HEK293 (cell line): ENCODE measurements at regions of chr2 and their contacts with region 1.

Region 1: GRCh38 chr2:38947240-38948239 is 57.9 kb downstream of the ARHGEF33 start:
- H3K4me3 ChIP-seq: no peak overlapping the region
- H3K27ac ChIP-seq: no peak overlapping the region
- H3K4me1 ChIP-seq: peaks cover 9% of the 10 kb centered on the region
- CTCF ChIP-seq: peak; percentile 78

Region 2: GRCh38 chr2:38959938-38960608 is 12.5 kb after region 1 on chr2:
- CTCF ChIA-PET with region 1: interaction called, 11 read pairs
- POLR2A ChIA-PET with region 1: interaction called, 3 read pairs
- H3K4me3 ChIP-seq: no peak overlapping the region
- H3K27ac ChIP-seq: no peak overlapping the region
- H3K4me1 ChIP-seq: no peaks in the 10 kb centered on the region
- CTCF ChIP-seq: no peak

Region 3: DNA sequence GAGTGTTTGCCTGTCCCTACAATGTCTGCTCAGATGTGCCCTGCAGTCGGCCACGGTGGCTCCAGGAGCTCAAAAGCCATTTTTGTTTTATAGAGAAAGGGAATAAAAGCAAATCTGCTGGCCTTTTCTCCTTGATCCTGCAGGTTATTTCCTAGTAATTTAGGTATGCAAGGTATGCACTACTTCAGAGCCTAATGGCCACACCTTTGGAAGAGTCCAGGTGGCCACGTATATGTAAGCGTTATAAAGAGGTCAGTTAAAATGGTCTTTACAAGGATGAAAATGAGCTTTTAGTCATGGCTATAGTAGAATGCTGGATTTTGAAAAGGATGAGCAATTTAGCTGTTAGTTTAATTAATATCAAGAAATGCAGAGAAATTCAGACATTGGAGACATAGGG is 23.8 kb after region 1 on chr2:
- CTCF ChIA-PET with region 1: interaction called, 12 read pairs
- POLR2A ChIA-PET with region 1: no interaction called
- H3K4me3 ChIP-seq: no peak overlapping the region
- H3K27ac ChIP-seq: no peak overlapping the region
- H3K4me1 ChIP-seq: no peaks in the 10 kb centered on the region
- CTCF ChIP-seq: no peak

Region 4: GRCh38 chr2:39018638-39019037 is 71.1 kb after region 1 on chr2:
- CTCF ChIA-PET with region 1: interaction called, 12 read pairs
- POLR2A ChIA-PET with region 1: no interaction called
- H3K4me3 ChIP-seq: no peak overlapping the region
- H3K27ac ChIP-seq: no peak overlapping the region
- H3K4me1 ChIP-seq: peaks cover 11% of the 10 kb centered on the region
- CTCF ChIP-seq: no peak

Region 5: DNA sequence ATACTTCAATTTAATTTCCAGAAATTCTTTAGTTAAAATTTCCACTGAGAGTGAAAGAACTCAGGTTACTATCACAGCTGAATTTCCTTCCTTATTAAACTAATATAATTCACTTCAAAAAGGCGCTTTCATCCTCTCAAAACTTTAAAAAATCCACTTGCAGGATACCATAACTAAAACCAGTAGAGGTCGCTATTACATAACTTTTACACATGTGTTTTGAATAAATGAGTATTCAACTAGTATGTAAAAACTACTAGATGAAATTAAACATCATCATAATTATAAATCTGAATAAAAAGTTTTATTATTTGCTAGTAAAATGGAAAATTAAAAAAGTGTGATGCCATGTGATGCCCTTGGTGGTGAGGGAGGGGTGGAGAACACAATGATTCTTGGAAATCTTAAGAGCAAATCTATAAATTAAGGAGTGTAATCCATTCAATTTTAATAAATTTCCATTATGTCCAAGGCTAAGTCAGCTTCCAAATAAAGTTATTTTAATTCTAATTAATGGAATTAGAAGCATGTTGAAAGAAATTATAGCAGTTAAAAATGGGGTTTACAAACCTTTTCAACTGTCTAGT is 111.9 kb after region 1 on chr2:
- CTCF ChIA-PET with region 1: interaction called, 16 read pairs
- POLR2A ChIA-PET with region 1: no interaction called
- H3K4me3 ChIP-seq: no peak overlapping the region
- H3K27ac ChIP-seq: no peak overlapping the region
- H3K4me1 ChIP-seq: peaks cover 2% of the 10 kb centered on the region
- CTCF ChIP-seq: 0 out of 2 replicates have a peak, but pooled peaks have one; percentile 36

Region 6: DNA sequence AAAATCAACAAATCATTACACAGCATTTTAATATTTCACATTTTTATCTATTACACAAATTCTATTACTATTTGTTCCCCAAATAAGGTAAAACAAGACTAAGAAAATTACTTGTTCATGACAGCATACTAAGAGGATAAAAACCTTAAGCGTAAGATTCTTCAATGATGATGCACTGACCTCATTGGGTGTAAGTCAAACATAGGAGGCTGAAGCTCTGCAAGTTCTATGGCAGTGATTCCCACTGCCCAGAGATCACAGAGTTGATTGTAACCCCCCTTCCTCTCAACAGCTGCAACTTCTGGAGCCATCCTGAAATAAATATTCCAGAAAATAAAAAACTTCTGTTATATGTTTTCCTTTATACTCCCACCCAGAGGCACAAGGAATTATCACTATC is 378.4 kb after region 1 on chr2:
- CTCF ChIA-PET with region 1: no interaction called
- POLR2A ChIA-PET with region 1: no interaction called
- H3K4me3 ChIP-seq: no peak overlapping the region
- H3K27ac ChIP-seq: no peak overlapping the region
- H3K4me1 ChIP-seq: no peaks in the 10 kb centered on the region
- CTCF ChIP-seq: no peak